GM12878 (cell line): ENCODE measurements at regions of chr3 and their contacts with region 1.

Region 1: GRCh38 chr3:120795017-120795648 is 52.6 kb downstream of the GTF2E1 start:
- DNase-seq: peak; percentile 51
- ATAC-seq: peak; percentile 100
- H3K4me3 ChIP-seq: no peak overlapping the region
- H3K27ac ChIP-seq: no peak overlapping the region
- H3K4me1 ChIP-seq: peaks cover 5% of the 10 kb centered on the region
- H3K27me3 ChIP-seq: no peaks in the 10 kb centered on the region
- CTCF ChIP-seq: peak; percentile 78 to 91 (median 88); a peak in 5 of 6 replicates
- EP300 ChIP-seq: no peak
- POLR2A ChIP-seq: no peak
- RAD21 ChIP-seq: peak; percentile 98

Region 2: DNA sequence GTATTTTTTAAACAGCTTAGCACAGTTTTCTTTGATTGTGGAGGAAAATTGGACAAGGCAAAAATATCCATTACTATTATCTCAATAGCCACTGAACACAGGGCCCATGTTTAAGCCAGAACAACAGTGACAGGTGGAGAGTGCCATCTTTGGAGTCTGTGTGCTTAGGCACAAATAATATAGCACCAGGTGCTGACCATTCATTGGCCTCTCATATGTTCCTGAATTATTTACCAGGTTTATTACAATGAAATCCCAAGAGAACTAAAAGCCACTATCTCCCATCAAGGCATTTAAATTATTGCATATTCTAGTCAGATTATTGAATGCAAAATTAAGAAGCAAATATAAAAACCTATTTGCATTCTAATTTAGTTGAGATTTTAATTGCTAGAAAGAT is 549.7 kb before region 1 on chr3:
- CTCF ChIA-PET with region 1: interaction called, 3 read pairs
- POLR2A ChIA-PET with region 1: no interaction called
- RAD21 ChIA-PET with region 1: no interaction called
- SMC1A ChIA-PET with region 1: interaction called, 3 read pairs
- in situ Hi-C with region 1: loop called (anchors 10 kb)
- intact Hi-C with region 1: loop called (anchors 5 kb)
- DNase-seq: no peak
- ATAC-seq: no peak
- H3K4me3 ChIP-seq: no peak overlapping the region
- H3K27ac ChIP-seq: no peak overlapping the region
- H3K4me1 ChIP-seq: no peaks in the 10 kb centered on the region
- H3K27me3 ChIP-seq: no peaks in the 10 kb centered on the region
- CTCF ChIP-seq: no peak
- EP300 ChIP-seq: no peak
- POLR2A ChIP-seq: no peak
- RAD21 ChIP-seq: no peak

Region 3: DNA sequence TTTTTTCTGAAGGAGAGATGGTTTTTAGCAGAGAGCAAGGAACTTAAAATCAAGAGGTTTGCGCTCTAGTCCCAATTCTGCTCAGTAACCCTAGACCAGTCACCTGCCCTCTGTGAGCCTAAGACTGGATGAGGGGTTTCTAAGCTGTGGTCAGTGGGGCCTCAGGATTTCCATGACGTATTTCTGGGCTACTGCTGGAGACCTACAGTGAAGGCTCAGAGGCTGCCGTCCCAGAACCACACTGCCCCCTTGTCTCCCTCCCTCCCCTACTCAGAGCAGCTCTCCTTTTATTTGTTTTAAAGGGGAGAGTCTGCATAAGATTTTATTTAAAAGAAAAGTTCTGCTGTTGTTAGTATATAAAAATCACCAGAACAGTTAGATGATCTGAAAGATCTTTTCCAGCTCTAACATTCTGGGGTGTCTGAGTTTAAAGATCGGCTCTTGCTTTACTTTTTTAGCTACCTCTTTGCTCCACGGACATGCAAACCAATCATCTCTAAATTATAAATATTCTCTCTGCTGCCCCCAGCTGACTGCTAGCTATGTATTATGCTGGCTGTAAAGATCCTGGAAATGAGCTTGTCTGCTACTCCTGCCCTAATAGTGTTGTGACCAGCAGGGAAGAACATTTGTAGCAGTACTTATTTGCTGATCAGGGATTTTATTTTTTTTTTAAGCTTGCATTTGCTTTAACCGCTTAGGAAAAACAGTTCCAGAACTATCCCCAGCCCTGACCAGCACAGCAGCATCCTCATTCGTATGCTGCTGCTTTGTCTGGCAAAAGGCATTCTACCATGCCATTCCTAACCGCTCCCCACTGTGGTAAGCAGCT is 227.5 kb before region 1 on chr3:
- CTCF ChIA-PET with region 1: interaction called, 376 read pairs
- POLR2A ChIA-PET with region 1: interaction called, 5 read pairs
- RAD21 ChIA-PET with region 1: interaction called, 36 read pairs
- SMC1A ChIA-PET with region 1: interaction called, 50 read pairs
- in situ Hi-C with region 1: loop called (anchors 5 kb)
- intact Hi-C with region 1: no loop called
- DNase-seq: no peak
- ATAC-seq: peak; percentile 89
- H3K4me3 ChIP-seq: no peak overlapping the region
- H3K27ac ChIP-seq: no peak overlapping the region
- H3K4me1 ChIP-seq: no peaks in the 10 kb centered on the region
- H3K27me3 ChIP-seq: no peaks in the 10 kb centered on the region
- CTCF ChIP-seq: peak in 2 of 3 experiments; percentile 21 to 34; a peak in 3 of 6 replicates
- EP300 ChIP-seq: no peak
- POLR2A ChIP-seq: no peak
- RAD21 ChIP-seq: no peak

Region 4: DNA sequence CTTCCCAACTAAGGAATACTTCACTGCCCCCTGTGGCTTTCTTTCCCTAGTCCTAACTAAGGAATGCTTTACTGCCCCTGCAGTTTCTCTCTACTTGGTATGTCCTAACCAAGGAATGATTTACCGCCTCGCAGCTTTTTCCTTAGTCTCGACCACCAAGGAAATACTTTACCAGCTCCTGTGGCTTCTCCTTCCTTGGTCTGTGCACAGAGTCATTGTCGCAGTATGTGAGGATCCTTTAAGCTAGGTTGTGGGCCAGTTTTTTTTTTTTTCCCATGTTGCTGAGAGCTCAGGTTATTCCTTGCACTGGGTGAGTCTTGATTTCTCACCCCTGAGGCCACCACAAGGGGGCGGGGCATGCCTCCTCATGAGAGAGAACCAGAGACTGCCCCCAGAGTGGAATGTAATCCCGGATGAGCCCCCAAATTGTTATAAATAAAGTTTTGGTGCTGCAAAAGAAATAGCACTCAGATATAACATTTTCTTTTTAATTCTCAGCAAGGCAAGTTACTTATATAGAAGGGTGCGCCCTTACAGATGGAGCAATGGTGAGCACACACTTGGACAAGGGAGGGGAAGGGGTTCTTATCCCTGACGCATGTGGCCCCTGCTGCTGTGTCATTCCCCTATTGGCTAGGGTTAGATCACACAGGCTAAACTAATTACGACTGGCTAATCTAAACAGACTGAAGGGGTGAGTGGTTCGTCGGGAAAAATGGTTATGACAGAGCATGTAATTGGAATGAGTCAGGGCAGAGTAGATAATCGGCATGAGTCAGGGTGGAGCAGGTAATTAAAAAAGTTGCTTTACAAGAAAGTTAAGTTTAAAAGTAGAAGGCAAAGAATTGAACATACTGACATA is 172.0 kb before region 1 on chr3:
- CTCF ChIA-PET with region 1: interaction called, 12 read pairs
- POLR2A ChIA-PET with region 1: no interaction called
- RAD21 ChIA-PET with region 1: interaction called, 14 read pairs
- SMC1A ChIA-PET with region 1: interaction called, 8 read pairs
- in situ Hi-C with region 1: no loop called
- intact Hi-C with region 1: loop called (anchors 5 kb)
- DNase-seq: no peak
- ATAC-seq: peak; percentile 53
- H3K4me3 ChIP-seq: no peak overlapping the region
- H3K27ac ChIP-seq: no peak overlapping the region
- H3K4me1 ChIP-seq: no peaks in the 10 kb centered on the region
- H3K27me3 ChIP-seq: no peaks in the 10 kb centered on the region
- CTCF ChIP-seq: peak in 2 of 3 experiments; percentile 13 to 29; a peak in 1 of 6 replicates
- EP300 ChIP-seq: no peak
- POLR2A ChIP-seq: no peak
- RAD21 ChIP-seq: peak; percentile 39; the same call in 1 of the 2 replicates

Region 5: DNA sequence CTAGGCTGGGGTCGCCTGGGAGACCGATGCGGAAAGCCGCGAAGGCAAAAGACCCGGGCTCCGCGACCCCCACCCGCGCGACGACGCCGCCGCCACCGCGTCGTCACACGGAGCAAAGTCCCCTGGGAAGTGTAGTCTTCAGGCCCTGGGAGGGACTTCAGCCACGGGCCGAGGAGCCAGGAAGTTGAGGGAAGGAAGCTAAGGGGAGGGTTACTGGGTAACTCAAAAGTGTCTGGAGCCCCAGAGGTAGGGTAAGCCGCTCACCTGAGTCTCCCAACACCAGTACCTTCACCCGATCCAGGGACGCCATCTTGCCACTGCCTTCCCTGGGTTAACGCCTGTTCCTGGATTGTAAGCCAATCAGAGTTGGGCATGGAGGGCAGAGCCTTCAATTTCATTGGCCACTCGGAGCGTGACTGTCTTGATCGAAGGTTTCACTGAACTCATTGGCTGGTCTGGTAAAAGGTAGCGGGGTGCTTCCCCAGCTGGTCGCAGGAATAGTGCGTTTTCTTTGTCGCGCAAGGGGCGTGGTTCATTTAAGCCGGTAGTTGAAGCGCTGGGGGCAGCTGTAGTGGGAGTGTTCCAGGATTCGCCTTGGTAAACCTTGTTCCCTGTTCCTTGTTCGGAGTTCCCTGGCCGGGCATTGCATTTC is 52.8 kb before region 1 on chr3 and contains the starts of genes GTF2E1 and RABL3:
- CTCF ChIA-PET with region 1: interaction called, 15 read pairs
- POLR2A ChIA-PET with region 1: no interaction called
- RAD21 ChIA-PET with region 1: interaction called, 4 read pairs
- SMC1A ChIA-PET with region 1: interaction called, 18 read pairs
- in situ Hi-C with region 1: no loop called
- intact Hi-C with region 1: no loop called
- DNase-seq: peak; percentile 99
- ATAC-seq: peak; percentile 99
- H3K4me3 ChIP-seq: peak within 1 kb of the TSS; percentile 100
- H3K27ac ChIP-seq: peak within 1 kb of the TSS; percentile 100
- H3K4me1 ChIP-seq: no peaks in the 10 kb centered on the region
- H3K27me3 ChIP-seq: no peaks in the 10 kb centered on the region
- CTCF ChIP-seq: no peak
- EP300 ChIP-seq: 0 out of 4 replicates have a peak, but pooled peaks of 1 of the 2 experiments have one; percentile 14
- POLR2A ChIP-seq: peak; percentile 91
- RAD21 ChIP-seq: no peak
- polyA plus RNA-seq, gene GTF2E1: 9.2 to 17.6 TPM
- polyA plus RNA-seq, gene RABL3: 28.1 to 30.3 TPM

Region 6: GRCh38 chr3:120780977-120781376 is 14.2 kb before region 1 on chr3:
- CTCF ChIA-PET with region 1: interaction called, 9 read pairs
- POLR2A ChIA-PET with region 1: no interaction called
- RAD21 ChIA-PET with region 1: interaction called, 6 read pairs
- SMC1A ChIA-PET with region 1: interaction called, 11 read pairs
- in situ Hi-C with region 1: no loop called
- intact Hi-C with region 1: no loop called
- DNase-seq: peak; percentile 62
- ATAC-seq: peak; percentile 98
- H3K4me3 ChIP-seq: no peak overlapping the region
- H3K27ac ChIP-seq: peak overlapping the region; percentile 7; the same call in 1 of the 2 replicates
- H3K4me1 ChIP-seq: peaks cover 11% of the 10 kb centered on the region
- H3K27me3 ChIP-seq: no peaks in the 10 kb centered on the region
- CTCF ChIP-seq: no peak
- EP300 ChIP-seq: peak; percentile 83 to 87
- POLR2A ChIP-seq: no peak
- RAD21 ChIP-seq: no peak